WTC11 (cell line): ENCODE measurements at regions of chr16 and their contacts with region 1.

Region 1: DNA sequence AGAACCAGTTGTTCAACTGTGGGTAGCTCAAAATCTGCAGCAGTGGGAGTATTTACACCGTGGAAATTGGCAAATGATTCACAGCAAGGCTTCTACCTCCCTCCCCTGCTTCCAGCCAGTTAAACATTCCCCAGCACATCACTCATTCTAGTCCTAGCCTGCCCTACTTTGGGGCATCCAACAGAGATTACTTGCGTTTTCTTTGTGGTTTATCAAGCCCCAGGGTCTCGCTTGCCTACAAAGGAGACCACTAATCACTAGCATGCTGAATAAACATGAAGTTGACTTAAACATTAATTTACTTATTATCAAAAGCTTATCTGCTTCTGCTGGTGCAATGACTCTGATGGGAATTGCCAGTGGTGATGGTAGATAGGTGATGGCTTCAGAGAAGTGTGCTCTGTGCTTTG is 94.5 kb downstream of the MARF1 start:
- DNase-seq: no peak
- ATAC-seq: no peak
- H3K4me3 Mint-ChIP-seq: no peak overlapping the region
- H3K27ac Mint-ChIP-seq: no peak overlapping the region
- H3K4me1 Mint-ChIP-seq: no peaks in the 10 kb centered on the region; the same call in 1 of the 2 replicates
- H3K27me3 Mint-ChIP-seq: no peaks in the 10 kb centered on the region
- CTCF ChIP-seq: no peak

Region 2: GRCh38 chr16:15559176-15559575 is 10.7 kb after region 1 on chr16:
- CTCF ChIA-PET with region 1: interaction called, 12 read pairs
- POLR2A ChIA-PET with region 1: no interaction called
- DNase-seq: no peak
- ATAC-seq: no peak
- H3K4me3 Mint-ChIP-seq: no peak overlapping the region
- H3K27ac Mint-ChIP-seq: no peak overlapping the region
- H3K4me1 Mint-ChIP-seq: peaks cover 18% of the 10 kb centered on the region
- H3K27me3 Mint-ChIP-seq: no peaks in the 10 kb centered on the region; the same call in 1 of the 2 replicates
- CTCF ChIP-seq: no peak